Calu3 (cell line): ENCODE measurements at regions of chr10 and their contacts with region 1.

Region 1: DNA sequence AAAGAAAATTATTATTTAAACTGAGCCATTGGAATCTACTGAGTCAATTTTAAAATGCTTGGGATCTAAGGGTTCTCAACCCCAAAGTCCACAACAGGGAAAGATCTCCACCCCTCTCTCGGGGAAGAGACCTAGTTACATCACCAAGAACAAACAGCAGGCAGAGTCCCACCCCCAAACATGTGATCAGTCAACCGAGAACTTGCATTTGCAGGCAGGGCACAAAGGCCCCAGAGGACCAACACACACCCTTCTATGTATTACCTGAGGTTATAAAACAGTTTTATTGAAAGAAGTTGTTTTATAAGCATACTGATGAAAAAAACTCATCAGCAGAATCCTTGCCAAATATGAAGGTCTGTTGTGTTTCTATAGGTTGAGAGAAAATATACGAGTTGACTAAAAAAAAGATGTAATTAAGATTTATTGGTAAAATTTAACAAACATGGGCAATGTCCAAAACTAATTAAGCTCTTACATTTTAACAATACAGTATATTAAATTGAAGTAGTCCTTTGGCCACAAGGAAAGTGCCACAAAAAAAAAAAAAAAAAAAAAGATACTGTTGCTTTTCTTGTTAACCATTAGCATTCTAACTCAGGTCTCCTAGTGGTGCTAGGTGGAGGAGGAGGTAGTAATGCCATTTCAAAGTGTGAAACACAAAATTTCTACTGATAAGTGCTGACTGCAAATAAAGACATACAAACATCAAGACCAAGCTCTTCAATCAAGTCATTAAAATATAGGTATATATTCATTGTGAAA is 975 bp upstream of the USP54 start:
- DNase-seq: peak; percentile 80
- H3K4me3 Mint-ChIP-seq: peak overlapping the region; percentile 62
- H3K27ac Mint-ChIP-seq: peak overlapping the region; percentile 93
- H3K4me1 Mint-ChIP-seq: peaks cover 43% of the 10 kb centered on the region
- H3K27me3 Mint-ChIP-seq: no peaks in the 10 kb centered on the region
- CTCF ChIP-seq: no peak

Region 2: DNA sequence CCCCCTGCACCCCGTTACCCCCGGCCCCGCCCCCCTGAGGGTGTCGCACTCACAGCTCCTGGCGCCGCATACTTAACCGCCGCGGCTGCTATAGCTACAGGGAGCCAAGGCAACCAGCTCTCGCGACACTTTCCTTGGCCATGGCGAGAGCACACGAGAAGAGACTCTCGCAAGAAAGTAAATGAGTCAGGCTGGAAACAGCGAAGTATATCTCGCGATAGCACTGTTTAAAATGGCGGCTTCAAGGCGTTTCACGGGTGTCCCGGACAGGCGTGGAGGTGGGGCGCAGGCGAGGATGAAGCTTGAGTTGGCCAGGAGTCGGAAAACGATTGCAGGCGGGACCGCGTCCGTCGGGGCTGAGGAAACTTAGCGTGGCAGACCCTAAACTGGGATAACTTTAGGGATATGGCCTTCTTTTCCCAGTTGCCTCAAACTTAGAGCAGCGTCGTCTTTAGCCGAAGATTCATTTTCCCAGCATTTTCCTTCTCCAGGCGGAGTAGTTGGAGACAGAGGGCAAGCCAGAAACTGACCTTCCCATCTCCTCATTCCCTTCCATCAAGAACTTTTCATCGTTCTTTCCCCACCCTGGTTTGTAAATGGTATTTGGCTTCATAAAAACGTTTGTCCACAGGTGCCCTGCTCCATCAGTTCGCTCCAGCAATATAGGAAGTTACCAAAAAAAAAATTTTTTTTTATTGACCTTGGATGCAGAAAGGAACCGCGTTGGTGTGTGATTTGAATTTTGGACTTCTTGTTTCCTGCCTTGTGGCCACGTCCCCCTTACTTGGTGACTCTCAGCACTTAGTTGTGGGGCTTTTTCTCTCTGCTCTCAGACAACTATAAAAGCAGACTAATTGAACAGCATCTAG is 34.0 kb after region 1 on chr10:
- CTCF ChIA-PET with region 1: interaction called, 3 read pairs
- intact Hi-C with region 1: loop called (anchors 5 kb)
- DNase-seq: peak; percentile 94
- H3K4me3 Mint-ChIP-seq: peak overlapping the region; percentile 86
- H3K27ac Mint-ChIP-seq: peak overlapping the region; percentile 100
- H3K4me1 Mint-ChIP-seq: no peaks in the 10 kb centered on the region
- H3K27me3 Mint-ChIP-seq: no peaks in the 10 kb centered on the region
- CTCF ChIP-seq: no peak

Region 3: GRCh38 chr10:73956476-73957359 is 364.6 kb after region 1 on chr10:
- CTCF ChIA-PET with region 1: no interaction called
- intact Hi-C with region 1: no loop called
- DNase-seq: peak; percentile 77
- H3K4me3 Mint-ChIP-seq: peak overlapping the region; percentile 23
- H3K27ac Mint-ChIP-seq: peak overlapping the region; percentile 48
- H3K4me1 Mint-ChIP-seq: peaks cover 39% of the 10 kb centered on the region
- H3K27me3 Mint-ChIP-seq: no peaks in the 10 kb centered on the region
- CTCF ChIP-seq: no peak

Region 4: GRCh38 chr10:74394416-74394969 is 802.4 kb after region 1 on chr10:
- CTCF ChIA-PET with region 1: no interaction called
- intact Hi-C with region 1: no loop called
- DNase-seq: no peak
- H3K4me3 Mint-ChIP-seq: no peak overlapping the region
- H3K27ac Mint-ChIP-seq: no peak overlapping the region
- H3K4me1 Mint-ChIP-seq: no peaks in the 10 kb centered on the region
- H3K27me3 Mint-ChIP-seq: no peaks in the 10 kb centered on the region
- CTCF ChIP-seq: no peak